ENCODE measurements at regions of chr1 and their contacts with region 1.

Region 1: GRCh38 chr1:189859385-189859977 is 618.2 kb downstream of the BRINP3 start:
- DNase-seq: peak; percentile 37
- H3K4me3 Mint-ChIP-seq: no peak overlapping the region
- H3K27ac Mint-ChIP-seq: no peak overlapping the region
- H3K4me1 Mint-ChIP-seq: no peaks in the 10 kb centered on the region
- H3K27me3 Mint-ChIP-seq: no peaks in the 10 kb centered on the region
- CTCF ChIP-seq: peak; percentile 83

Region 2: GRCh38 chr1:189775380-189775779 is 84.1 kb before region 1 on chr1:
- CTCF ChIA-PET with region 1: no interaction called
- intact Hi-C with region 1: no loop called
- DNase-seq: no peak
- H3K4me3 Mint-ChIP-seq: no peak overlapping the region
- H3K27ac Mint-ChIP-seq: no peak overlapping the region
- H3K4me1 Mint-ChIP-seq: peaks cover 12% of the 10 kb centered on the region
- H3K27me3 Mint-ChIP-seq: no peaks in the 10 kb centered on the region
- CTCF ChIP-seq: no peak

Region 3: GRCh38 chr1:190226006-190226405 is 366.5 kb after region 1 on chr1:
- CTCF ChIA-PET with region 1: no interaction called
- intact Hi-C with region 1: loop called (anchors 10 kb)
- DNase-seq: no peak
- H3K4me3 Mint-ChIP-seq: no peak overlapping the region
- H3K27ac Mint-ChIP-seq: no peak overlapping the region
- H3K4me1 Mint-ChIP-seq: no peaks in the 10 kb centered on the region
- H3K27me3 Mint-ChIP-seq: no peaks in the 10 kb centered on the region
- CTCF ChIP-seq: no peak

Measured in Calu3 (cell line).